ENCODE measurements at regions of chr17 and their contacts with region 1.

Region 1: DNA sequence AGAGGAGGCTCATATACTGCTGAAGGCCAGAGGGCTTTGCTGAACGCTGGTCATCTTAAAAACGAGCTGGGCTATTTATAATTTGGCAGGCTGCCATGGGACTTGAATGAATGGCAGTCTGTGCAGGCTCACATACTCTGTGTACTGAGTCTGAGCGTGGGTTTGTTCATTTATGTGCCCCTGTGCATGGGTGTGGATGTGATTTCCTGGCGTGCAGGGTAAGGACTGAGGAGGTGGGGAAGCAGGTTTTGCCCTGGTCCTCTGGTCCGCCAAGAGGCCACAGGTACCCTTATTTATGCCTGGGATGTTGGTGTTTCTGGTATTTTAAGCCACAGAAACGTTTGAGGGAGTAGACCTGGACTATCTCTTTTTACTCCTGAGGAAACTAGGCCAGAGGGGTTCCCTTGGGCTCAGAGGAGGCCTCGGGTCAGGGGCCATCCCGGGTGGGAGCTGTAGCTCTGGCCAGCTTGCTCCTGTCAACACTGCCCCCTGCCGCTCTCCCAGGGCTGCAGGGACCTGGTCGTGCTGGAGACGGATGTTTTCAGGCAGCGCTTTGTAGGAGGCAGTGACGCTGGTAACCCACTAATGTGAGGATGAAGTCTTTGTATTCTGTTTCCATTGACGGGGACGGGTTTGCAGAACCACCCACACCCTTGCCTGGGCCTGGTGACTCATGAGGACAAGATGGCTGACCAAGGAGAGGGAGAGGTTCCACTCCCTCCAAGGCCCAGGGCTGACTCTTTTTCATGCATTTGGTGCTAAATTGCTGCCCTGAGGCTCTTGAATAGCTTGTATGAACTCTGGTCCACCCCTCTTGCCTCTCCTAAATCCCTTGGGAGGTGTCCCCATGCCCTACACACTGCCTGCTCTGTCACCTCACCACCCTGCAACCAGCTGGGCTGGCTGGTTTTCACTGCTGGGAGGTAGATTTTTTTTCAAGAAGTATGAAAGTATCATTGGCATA is 184.5 kb downstream of the MSI2 start:
- DNase-seq: peak; percentile 95
- ATAC-seq: peak; percentile 86
- H3K4me3 Mint-ChIP-seq: peak overlapping the region; percentile 50
- H3K27ac Mint-ChIP-seq: peak overlapping the region; percentile 97
- H3K4me1 Mint-ChIP-seq: peaks cover 57% of the 10 kb centered on the region
- H3K27me3 Mint-ChIP-seq: no peaks in the 10 kb centered on the region
- CTCF ChIP-seq: peak; percentile 76

Region 2: GRCh38 chr17:57350277-57350676 is 90.5 kb before region 1 on chr17:
- CTCF ChIA-PET with region 1: no interaction called
- POLR2A ChIA-PET with region 1: no interaction called
- intact Hi-C with region 1: no loop called
- DNase-seq: no peak
- ATAC-seq: no peak
- H3K4me3 Mint-ChIP-seq: no peak overlapping the region
- H3K27ac Mint-ChIP-seq: no peak overlapping the region
- H3K4me1 Mint-ChIP-seq: peaks cover 31% of the 10 kb centered on the region
- H3K27me3 Mint-ChIP-seq: no peaks in the 10 kb centered on the region
- CTCF ChIP-seq: no peak

Region 3: DNA sequence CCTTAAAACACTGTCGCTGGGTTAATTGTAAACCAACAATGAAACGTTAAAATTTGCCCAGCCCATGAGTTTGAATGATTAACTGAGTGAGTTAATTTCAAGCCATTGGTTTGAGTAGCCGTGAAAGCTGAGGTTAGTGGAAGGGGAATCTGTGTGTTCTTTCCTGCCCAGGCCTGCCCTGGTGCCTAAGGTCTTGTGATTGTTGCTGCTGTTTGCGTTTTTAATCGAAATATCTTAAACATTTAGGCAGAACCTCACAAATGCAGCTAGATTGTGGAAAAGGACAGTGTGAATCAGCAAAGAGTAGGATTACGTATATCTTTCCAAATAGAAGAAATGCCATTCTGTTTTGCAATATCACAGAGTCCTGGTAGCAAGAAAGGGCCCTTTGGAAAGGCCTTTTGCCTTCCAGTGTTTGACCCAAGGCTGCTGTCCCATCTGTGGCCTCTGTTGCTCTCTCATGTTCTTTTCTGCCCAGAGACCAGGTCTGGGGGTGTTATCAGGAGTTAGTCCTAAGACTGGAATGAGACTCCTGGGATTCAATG is 70.7 kb before region 1 on chr17:
- CTCF ChIA-PET with region 1: no interaction called
- POLR2A ChIA-PET with region 1: no interaction called
- intact Hi-C with region 1: no loop called
- DNase-seq: no peak
- ATAC-seq: no peak
- H3K4me3 Mint-ChIP-seq: no peak overlapping the region
- H3K27ac Mint-ChIP-seq: no peak overlapping the region
- H3K4me1 Mint-ChIP-seq: peaks cover 26% of the 10 kb centered on the region
- H3K27me3 Mint-ChIP-seq: no peaks in the 10 kb centered on the region
- CTCF ChIP-seq: no peak

Region 4: GRCh38 chr17:57408071-57408811 is 32.6 kb before region 1 on chr17:
- CTCF ChIA-PET with region 1: interaction called, 12 read pairs
- POLR2A ChIA-PET with region 1: interaction called, 3 read pairs
- intact Hi-C with region 1: no loop called
- DNase-seq: peak; percentile 73
- ATAC-seq: peak; percentile 82
- H3K4me3 Mint-ChIP-seq: peak overlapping the region; percentile 34
- H3K27ac Mint-ChIP-seq: peak overlapping the region; percentile 43
- H3K4me1 Mint-ChIP-seq: peaks cover 49% of the 10 kb centered on the region
- H3K27me3 Mint-ChIP-seq: no peaks in the 10 kb centered on the region
- CTCF ChIP-seq: no peak

Region 5: GRCh38 chr17:57455063-57455914 is 14.5 kb after region 1 on chr17:
- CTCF ChIA-PET with region 1: interaction called, 7 read pairs
- POLR2A ChIA-PET with region 1: interaction called, 24 read pairs
- intact Hi-C with region 1: no loop called
- DNase-seq: peak; percentile 81
- ATAC-seq: peak; percentile 73
- H3K4me3 Mint-ChIP-seq: peak overlapping the region; percentile 57
- H3K27ac Mint-ChIP-seq: peak overlapping the region; percentile 94
- H3K4me1 Mint-ChIP-seq: peaks cover 68% of the 10 kb centered on the region
- H3K27me3 Mint-ChIP-seq: no peaks in the 10 kb centered on the region
- CTCF ChIP-seq: no peak

Region 6: GRCh38 chr17:57463103-57463851 is 22.5 kb after region 1 on chr17:
- CTCF ChIA-PET with region 1: interaction called, 3 read pairs
- POLR2A ChIA-PET with region 1: interaction called, 6 read pairs
- intact Hi-C with region 1: loop called (anchors 2 kb)
- DNase-seq: peak; percentile 95
- ATAC-seq: peak; percentile 95
- H3K4me3 Mint-ChIP-seq: peak overlapping the region; percentile 25
- H3K27ac Mint-ChIP-seq: peak overlapping the region; percentile 82
- H3K4me1 Mint-ChIP-seq: peaks cover 71% of the 10 kb centered on the region
- H3K27me3 Mint-ChIP-seq: no peaks in the 10 kb centered on the region
- CTCF ChIP-seq: no peak

Measured in activated CD8-positive, alpha-beta T cell treated with anti-CD3 and anti-CD28 coated beads for 36 hours (primary cell).